ENCODE measurements at regions of chr1 and their contacts with region 1.

Region 1: GRCh38 chr1:185244015-185244747 is 72.9 kb downstream of the IVNS1ABP start:
- DNase-seq: peak; percentile 3
- H3K4me3 Mint-ChIP-seq: no peak overlapping the region
- H3K27ac Mint-ChIP-seq: no peak overlapping the region
- H3K4me1 Mint-ChIP-seq: no peaks in the 10 kb centered on the region
- H3K27me3 Mint-ChIP-seq: no peaks in the 10 kb centered on the region
- CTCF ChIP-seq: no peak

Region 2: DNA sequence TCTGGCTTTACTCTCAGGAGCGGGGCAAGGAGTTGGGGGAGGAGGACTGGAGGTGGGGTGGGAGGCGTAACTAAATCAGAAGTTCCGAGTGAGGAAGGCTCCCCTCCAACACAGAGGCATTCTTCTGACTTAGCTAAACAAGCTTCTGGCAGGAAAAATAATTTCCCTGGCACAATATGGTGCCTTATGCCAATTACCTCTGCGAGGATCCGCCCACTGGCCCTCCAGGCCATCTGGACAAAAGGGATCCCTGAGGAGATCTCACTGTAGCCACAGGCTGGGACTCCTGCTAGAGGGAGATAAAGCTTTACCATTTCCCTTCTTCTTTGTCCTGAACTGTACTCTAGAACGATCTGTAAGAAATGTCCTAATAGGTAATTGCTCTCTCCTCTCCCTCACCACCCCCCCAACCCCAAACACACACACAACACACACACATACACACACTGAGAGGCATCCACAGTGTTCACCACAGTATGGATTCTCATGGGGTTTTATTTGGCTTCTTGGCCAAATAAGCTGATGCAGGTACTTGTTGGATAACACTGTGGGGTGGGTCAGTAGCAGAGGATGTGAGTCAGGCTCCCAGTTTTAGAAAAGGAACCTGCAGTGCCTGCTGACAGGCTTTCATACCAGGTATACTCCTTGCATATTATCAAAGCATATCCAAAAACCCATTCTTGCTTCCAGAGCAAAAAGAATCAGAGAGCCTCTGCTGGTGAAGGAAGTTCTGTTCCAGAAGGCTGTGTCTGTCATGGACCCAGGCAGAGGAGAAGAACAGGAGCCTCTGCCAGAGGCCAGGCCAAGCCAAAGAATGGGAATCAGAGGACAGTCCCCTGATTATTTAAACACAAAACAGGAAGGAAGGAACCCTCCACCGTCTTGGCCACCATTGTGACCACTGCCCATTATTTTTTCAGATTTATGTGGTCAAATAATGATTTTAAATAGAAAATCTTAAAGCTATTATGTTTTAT is 688.2 kb before region 1 on chr1:
- CTCF ChIA-PET with region 1: no interaction called
- intact Hi-C with region 1: no loop called
- DNase-seq: no peak
- H3K4me3 Mint-ChIP-seq: no peak overlapping the region
- H3K27ac Mint-ChIP-seq: no peak overlapping the region
- H3K4me1 Mint-ChIP-seq: no peaks in the 10 kb centered on the region
- H3K27me3 Mint-ChIP-seq: no peaks in the 10 kb centered on the region
- CTCF ChIP-seq: no peak

Region 3: GRCh38 chr1:185267301-185267700 is 23.1 kb after region 1 on chr1:
- CTCF ChIA-PET with region 1: interaction called, 10 read pairs
- intact Hi-C with region 1: no loop called
- DNase-seq: no peak
- H3K4me3 Mint-ChIP-seq: no peak overlapping the region
- H3K27ac Mint-ChIP-seq: no peak overlapping the region
- H3K4me1 Mint-ChIP-seq: no peaks in the 10 kb centered on the region
- H3K27me3 Mint-ChIP-seq: no peaks in the 10 kb centered on the region
- CTCF ChIP-seq: no peak

Region 4: GRCh38 chr1:185695299-185695698 is 451.1 kb after region 1 on chr1:
- CTCF ChIA-PET with region 1: no interaction called
- intact Hi-C with region 1: loop called (anchors 5 kb)
- DNase-seq: no peak
- H3K4me3 Mint-ChIP-seq: no peak overlapping the region
- H3K27ac Mint-ChIP-seq: no peak overlapping the region
- H3K4me1 Mint-ChIP-seq: peaks cover 9% of the 10 kb centered on the region
- H3K27me3 Mint-ChIP-seq: peaks cover 1% of the 10 kb centered on the region
- CTCF ChIP-seq: peak; percentile 24

Measured in Calu3 (cell line).